ENCODE measurements at regions of chr15 and their contacts with region 1.

Region 1: DNA sequence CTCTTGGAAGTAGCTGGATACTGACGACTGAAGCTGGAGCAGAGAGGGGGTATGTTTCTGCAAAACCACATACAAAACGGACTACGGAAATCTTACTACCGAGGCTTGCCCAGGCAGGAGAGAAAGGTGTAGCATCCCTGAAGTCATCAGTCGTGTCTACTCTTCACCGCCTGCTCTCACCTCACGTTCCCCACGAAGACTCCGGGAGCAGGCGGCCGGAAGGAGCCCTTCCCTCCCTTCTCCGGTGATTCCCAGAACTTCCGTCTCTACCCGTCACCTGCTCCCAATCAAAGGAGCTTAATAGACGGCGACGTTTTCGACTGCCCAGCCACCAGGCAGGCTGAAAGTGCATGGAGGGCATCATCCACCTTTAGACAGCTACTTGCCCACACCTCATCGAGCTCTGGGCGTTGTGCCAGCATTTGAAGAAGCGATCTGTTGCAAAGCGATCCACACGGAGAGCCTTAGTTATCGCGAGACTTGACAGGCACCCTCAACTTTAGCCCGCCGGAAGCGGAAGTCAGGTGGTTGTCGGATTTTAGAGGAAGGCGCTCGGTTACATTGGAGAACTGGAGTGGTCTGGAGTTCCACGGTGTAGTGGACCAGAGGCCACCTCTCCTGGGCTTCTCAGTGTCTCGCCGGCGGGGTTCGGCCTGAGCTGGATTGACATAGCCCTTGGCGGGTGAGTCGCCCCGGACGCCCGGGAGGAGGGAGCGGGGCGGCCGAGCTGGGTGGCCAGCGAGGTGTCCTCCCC is at the start of gene RAMAC:
- DNase-seq: peak; percentile 96
- H3K4me3 Mint-ChIP-seq: peak within 1 kb of the TSS; percentile 98
- H3K27ac Mint-ChIP-seq: peak within 1 kb of the TSS; percentile 72
- H3K4me1 Mint-ChIP-seq: peaks cover 4% of the 10 kb centered on the region
- H3K27me3 Mint-ChIP-seq: no peaks in the 10 kb centered on the region
- CTCF ChIP-seq: no peak
- total RNA-seq, gene RAMAC: 21.0 and 25.6 TPM in 2 replicates

Region 2: GRCh38 chr15:82540055-82540983 is 445.5 kb before region 1 on chr15 and contains the start of gene RPS17:
- CTCF ChIA-PET with region 1: no interaction called
- POLR2A ChIA-PET with region 1: interaction called, 15 read pairs
- intact Hi-C with region 1: no loop called
- DNase-seq: peak; percentile 95
- H3K4me3 Mint-ChIP-seq: peak within 1 kb of the TSS; percentile 92
- H3K27ac Mint-ChIP-seq: peak within 1 kb of the TSS; percentile 81
- H3K4me1 Mint-ChIP-seq: peaks cover 30% of the 10 kb centered on the region
- H3K27me3 Mint-ChIP-seq: no peaks in the 10 kb centered on the region
- CTCF ChIP-seq: peak; percentile 99
- total RNA-seq, gene RPS17: 2,707 and 3,065 TPM in 2 replicates

Region 3: GRCh38 chr15:82832601-82833361 is 153.1 kb before region 1 on chr15:
- CTCF ChIA-PET with region 1: interaction called, 4 read pairs
- POLR2A ChIA-PET with region 1: interaction called, 14 read pairs
- intact Hi-C with region 1: no loop called
- DNase-seq: peak; percentile 76
- H3K4me3 Mint-ChIP-seq: no peak overlapping the region
- H3K27ac Mint-ChIP-seq: peak overlapping the region; percentile 75
- H3K4me1 Mint-ChIP-seq: peaks cover 16% of the 10 kb centered on the region
- H3K27me3 Mint-ChIP-seq: no peaks in the 10 kb centered on the region
- CTCF ChIP-seq: no peak

Region 4: GRCh38 chr15:82942617-82943078 is 43.2 kb before region 1 on chr15:
- CTCF ChIA-PET with region 1: no interaction called
- POLR2A ChIA-PET with region 1: interaction called, 16 read pairs
- intact Hi-C with region 1: no loop called
- DNase-seq: peak; percentile 95
- H3K4me3 Mint-ChIP-seq: no peak overlapping the region
- H3K27ac Mint-ChIP-seq: no peak overlapping the region
- H3K4me1 Mint-ChIP-seq: peaks cover 17% of the 10 kb centered on the region
- H3K27me3 Mint-ChIP-seq: no peaks in the 10 kb centered on the region
- CTCF ChIP-seq: no peak

Region 5: DNA sequence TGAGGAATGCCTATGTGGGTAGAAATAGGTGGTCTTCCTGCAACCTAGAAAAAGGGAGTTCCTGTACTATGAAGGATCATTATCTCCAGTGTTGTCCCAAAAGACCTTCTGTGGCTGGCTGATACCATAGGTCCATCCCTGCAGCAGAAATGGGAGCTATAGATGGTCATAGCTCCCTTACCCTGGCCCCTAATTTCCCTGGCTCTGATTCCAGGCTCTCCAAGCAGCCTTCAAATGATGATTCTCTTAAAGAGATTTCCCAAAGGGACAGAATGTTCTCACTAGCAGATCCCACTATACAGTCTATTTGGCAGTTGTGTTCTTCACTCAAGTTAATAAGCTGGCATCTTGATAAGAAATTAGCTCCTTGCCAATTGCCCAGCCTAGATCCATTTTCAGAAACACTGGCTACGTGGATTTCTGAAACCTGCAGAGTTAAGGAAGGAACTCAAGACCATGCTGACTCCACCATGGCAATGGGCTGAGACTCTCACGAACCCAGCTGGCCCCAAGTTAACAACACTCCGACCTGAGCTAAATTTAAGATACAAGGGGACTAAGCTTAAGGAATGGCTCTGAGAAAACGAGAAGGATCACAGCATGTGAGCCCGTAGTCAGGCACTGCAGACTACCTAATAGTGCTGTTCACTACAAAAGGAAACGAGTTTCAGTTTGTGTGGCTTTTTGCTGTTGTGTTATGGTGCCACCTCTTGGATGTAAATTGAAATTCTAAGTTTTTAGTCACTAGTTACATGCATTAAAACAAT is 14.2 kb after region 1 on chr15:
- CTCF ChIA-PET with region 1: interaction called, 31 read pairs
- POLR2A ChIA-PET with region 1: interaction called, 16 read pairs
- intact Hi-C with region 1: no loop called
- DNase-seq: peak; percentile 59
- H3K4me3 Mint-ChIP-seq: peak overlapping the region; percentile 67
- H3K27ac Mint-ChIP-seq: peak overlapping the region; percentile 69
- H3K4me1 Mint-ChIP-seq: no peaks in the 10 kb centered on the region
- H3K27me3 Mint-ChIP-seq: no peaks in the 10 kb centered on the region
- CTCF ChIP-seq: peak; percentile 57

Region 6: DNA sequence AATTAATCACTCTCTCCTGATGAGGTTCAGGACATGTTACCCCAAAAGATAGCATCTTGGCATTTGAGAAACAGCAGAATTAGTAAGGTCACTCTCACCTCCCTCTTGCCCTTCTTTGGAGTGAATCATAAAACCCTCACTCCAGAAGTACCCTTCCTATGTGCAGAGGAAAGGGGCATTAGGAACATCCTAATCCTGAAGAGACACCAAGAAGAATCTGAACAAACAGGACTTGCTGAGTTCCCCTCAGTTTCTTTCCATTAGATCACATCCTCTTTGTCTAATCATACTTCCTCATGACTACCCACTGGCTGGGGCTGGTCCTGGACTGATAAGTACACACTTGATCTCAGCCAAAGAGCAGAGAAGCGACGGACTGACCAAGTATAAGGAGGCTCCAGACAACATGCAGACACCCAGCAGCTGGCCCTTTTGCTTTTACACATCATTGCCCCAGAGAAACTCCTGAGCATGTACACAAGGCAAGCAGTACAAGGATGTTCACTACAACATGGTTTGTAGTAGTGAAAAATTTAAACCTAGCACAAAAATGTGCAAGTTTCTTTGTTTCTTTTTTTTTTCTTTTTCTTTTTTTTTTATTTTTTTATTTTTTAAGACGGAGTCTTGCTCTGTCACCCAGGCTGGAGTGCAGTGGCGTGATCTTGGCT is 106.6 kb after region 1 on chr15:
- CTCF ChIA-PET with region 1: no interaction called
- POLR2A ChIA-PET with region 1: no interaction called
- intact Hi-C with region 1: no loop called
- DNase-seq: no peak
- H3K4me3 Mint-ChIP-seq: no peak overlapping the region
- H3K27ac Mint-ChIP-seq: no peak overlapping the region
- H3K4me1 Mint-ChIP-seq: no peaks in the 10 kb centered on the region
- H3K27me3 Mint-ChIP-seq: peaks cover 14% of the 10 kb centered on the region
- CTCF ChIP-seq: no peak

Region 7: DNA sequence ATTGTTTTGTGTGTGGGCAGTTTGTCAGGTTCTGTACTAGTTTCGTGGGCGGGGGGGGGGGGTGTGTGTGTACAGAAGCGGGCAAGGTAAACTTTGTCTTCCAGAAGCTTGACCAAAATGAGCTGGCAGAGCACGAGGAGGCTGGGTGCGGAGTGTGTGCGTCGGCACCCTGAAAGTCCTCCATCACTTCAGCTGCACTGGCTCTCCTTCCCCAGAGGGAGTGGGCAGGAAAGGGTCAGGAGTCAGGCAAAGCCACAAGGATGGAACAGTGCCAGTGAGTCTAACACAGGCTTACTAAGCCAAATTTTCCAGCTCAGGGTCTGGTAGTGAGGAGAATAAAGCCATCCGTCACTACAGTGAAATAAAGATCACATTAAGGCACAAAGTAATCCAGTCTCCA is 449.3 kb after region 1 on chr15:
- CTCF ChIA-PET with region 1: no interaction called
- POLR2A ChIA-PET with region 1: no interaction called
- intact Hi-C with region 1: no loop called
- DNase-seq: no peak
- H3K4me3 Mint-ChIP-seq: no peak overlapping the region
- H3K27ac Mint-ChIP-seq: no peak overlapping the region
- H3K4me1 Mint-ChIP-seq: peaks cover 20% of the 10 kb centered on the region
- H3K27me3 Mint-ChIP-seq: no peaks in the 10 kb centered on the region
- CTCF ChIP-seq: no peak